Activated CD4-positive, alpha-beta T cell treated with anti-CD3 and anti-CD28 coated beads for 36 hours (primary cell): ENCODE measurements at regions of chr12 and their contacts with region 1.

Region 1: DNA sequence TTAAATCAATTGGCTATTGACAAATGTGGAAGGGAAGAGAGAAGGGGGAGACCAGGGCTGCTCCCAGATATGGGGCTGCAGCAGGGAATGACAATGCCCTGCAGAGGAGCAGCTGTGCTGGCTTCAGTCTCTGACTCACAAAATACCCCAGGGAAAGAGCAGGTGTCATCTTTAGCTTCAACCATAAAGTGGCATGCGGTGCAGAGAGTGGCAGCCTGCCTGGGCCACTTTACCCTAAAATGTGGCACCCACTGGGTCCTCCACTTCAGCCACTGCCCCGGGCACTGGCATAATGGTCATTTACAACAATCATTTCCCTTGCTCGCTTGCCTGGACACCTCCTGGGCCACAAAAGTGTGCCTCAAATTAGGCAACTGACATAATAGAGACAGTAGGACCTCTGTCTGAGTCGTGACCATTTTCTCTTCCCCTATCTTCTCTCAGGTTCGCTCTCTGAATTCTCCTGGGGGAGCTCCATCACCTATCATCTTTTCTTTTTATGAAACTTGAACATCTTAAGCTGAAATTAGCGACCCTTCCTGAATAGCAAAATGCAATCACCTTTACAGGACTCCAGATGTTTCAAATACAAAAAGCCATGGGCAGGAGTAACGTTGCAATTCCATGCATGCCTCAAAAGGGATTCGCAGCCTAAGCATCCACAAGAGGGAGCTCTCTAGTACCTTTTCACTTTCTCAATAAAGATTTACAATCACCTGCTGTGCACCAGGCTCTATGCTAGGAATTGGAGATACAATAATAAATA is 179.9 kb upstream of the ATF7IP start:
- DNase-seq: peak; percentile 38
- ATAC-seq: no peak
- H3K4me3 Mint-ChIP-seq: no peak overlapping the region
- H3K27ac Mint-ChIP-seq: no peak overlapping the region
- H3K4me1 Mint-ChIP-seq: no peaks in the 10 kb centered on the region
- H3K27me3 Mint-ChIP-seq: peaks cover 6% of the 10 kb centered on the region

Region 2: GRCh38 chr12:13981990-13982389 is 203.6 kb before region 1 on chr12:
- CTCF ChIA-PET with region 1: no interaction called
- POLR2A ChIA-PET with region 1: no interaction called
- intact Hi-C with region 1: no loop called
- DNase-seq: peak; percentile 41
- ATAC-seq: no peak
- H3K4me3 Mint-ChIP-seq: no peak overlapping the region
- H3K27ac Mint-ChIP-seq: no peak overlapping the region
- H3K4me1 Mint-ChIP-seq: peaks cover 11% of the 10 kb centered on the region
- H3K27me3 Mint-ChIP-seq: peaks cover 64% of the 10 kb centered on the region

Region 3: GRCh38 chr12:14373217-14373616 is 187.6 kb after region 1 on chr12:
- CTCF ChIA-PET with region 1: no interaction called
- POLR2A ChIA-PET with region 1: no interaction called
- intact Hi-C with region 1: no loop called
- DNase-seq: no peak
- ATAC-seq: peak; percentile 27
- H3K4me3 Mint-ChIP-seq: peak overlapping the region; percentile 24
- H3K27ac Mint-ChIP-seq: peak overlapping the region; percentile 87
- H3K4me1 Mint-ChIP-seq: peaks cover 62% of the 10 kb centered on the region
- H3K27me3 Mint-ChIP-seq: no peaks in the 10 kb centered on the region

Region 4: DNA sequence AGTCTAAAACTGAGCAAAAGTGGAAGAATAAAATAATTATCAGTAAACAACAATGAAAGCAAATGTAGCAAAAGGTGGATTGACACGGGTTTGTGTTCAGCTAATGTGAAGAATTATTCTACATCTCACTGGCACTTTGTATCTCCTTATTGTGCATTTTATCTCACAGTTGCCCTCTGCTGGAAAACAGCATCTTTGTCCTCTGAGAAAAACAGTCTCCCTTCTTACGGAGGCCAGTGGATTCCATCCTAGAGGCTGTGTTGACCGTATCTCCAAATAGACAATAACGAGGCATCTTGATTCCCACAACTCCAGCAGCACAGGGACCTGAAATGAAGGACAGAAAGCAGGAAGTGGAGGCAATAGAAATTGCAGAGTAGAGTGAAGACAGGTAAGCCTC is 433.4 kb after region 1 on chr12:
- CTCF ChIA-PET with region 1: no interaction called
- POLR2A ChIA-PET with region 1: no interaction called
- intact Hi-C with region 1: loop called in 1 of 2 experiments (anchors 5 kb)
- DNase-seq: no peak
- ATAC-seq: peak; percentile 33
- H3K4me3 Mint-ChIP-seq: no peak overlapping the region
- H3K27ac Mint-ChIP-seq: no peak overlapping the region
- H3K4me1 Mint-ChIP-seq: no peaks in the 10 kb centered on the region
- H3K27me3 Mint-ChIP-seq: peaks cover 8% of the 10 kb centered on the region